ENCODE measurements at regions of chr18 and their contacts with region 1.

Region 1: GRCh38 chr18:54983041-54983686 is 23.9 kb upstream of the CCDC68 start:
- DNase-seq: peak; percentile 50
- ATAC-seq: peak; percentile 39
- H3K4me3 ChIP-seq: no peak overlapping the region
- H3K4me3 Mint-ChIP-seq: no peak overlapping the region
- H3K27ac ChIP-seq: no peak overlapping the region
- H3K27ac Mint-ChIP-seq: no peak overlapping the region
- H3K4me1 ChIP-seq: no peaks in the 10 kb centered on the region
- H3K4me1 Mint-ChIP-seq: no peaks in the 10 kb centered on the region
- H3K27me3 ChIP-seq: peaks cover 0 to 6% (median 0%) of the 10 kb centered on the region in 4 experiments
- H3K27me3 Mint-ChIP-seq: peaks cover 4% of the 10 kb centered on the region
- CTCF ChIP-seq: peak; percentile 77

Region 2: GRCh38 chr18:54558609-54559585 is 424.3 kb before region 1 on chr18:
- CTCF ChIA-PET with region 1: no interaction called
- POLR2A ChIA-PET with region 1: no interaction called
- intact Hi-C with region 1: loop called (anchors 2 kb)
- DNase-seq: peak; percentile 8
- ATAC-seq: no peak
- H3K4me3 ChIP-seq: no peak overlapping the region
- H3K4me3 Mint-ChIP-seq: no peak overlapping the region
- H3K27ac ChIP-seq: no peak overlapping the region
- H3K27ac Mint-ChIP-seq: no peak overlapping the region
- H3K4me1 ChIP-seq: no peaks in the 10 kb centered on the region
- H3K4me1 Mint-ChIP-seq: no peaks in the 10 kb centered on the region
- H3K27me3 ChIP-seq: no peaks in the 10 kb centered on the region
- H3K27me3 Mint-ChIP-seq: no peaks in the 10 kb centered on the region
- CTCF ChIP-seq: peak; percentile 77